ENCODE measurements at regions of chr11 and their contacts with region 1.

Region 1: GRCh38 chr11:27485930-27486773 is 13.6 kb upstream of the LGR4 start:
- DNase-seq: peak in 4 of 9 experiments; percentile 3 to 66 (median 52)
- ATAC-seq: peak; percentile 51
- H3K4me3 ChIP-seq: no peak overlapping the region
- H3K4me3 Mint-ChIP-seq: no peak overlapping the region
- H3K27ac ChIP-seq: no peak overlapping the region
- H3K27ac Mint-ChIP-seq: no peak overlapping the region
- H3K4me1 ChIP-seq: no peaks in the 10 kb centered on the region
- H3K4me1 Mint-ChIP-seq: no peaks in the 10 kb centered on the region
- H3K27me3 ChIP-seq: no peaks in the 10 kb centered on the region
- H3K27me3 Mint-ChIP-seq: no peaks in the 10 kb centered on the region
- CTCF ChIP-seq: peak; percentile 98

Region 2: GRCh38 chr11:26286472-26287066 is 1199.6 kb before region 1 on chr11:
- CTCF ChIA-PET with region 1: interaction called, 3 read pairs
- POLR2A ChIA-PET with region 1: no interaction called
- intact Hi-C with region 1: loop called (anchors 2 to 5 kb)
- DNase-seq: peak in 1 of 9 experiments; percentile 1
- ATAC-seq: no peak
- H3K4me3 ChIP-seq: no peak overlapping the region
- H3K4me3 Mint-ChIP-seq: no peak overlapping the region
- H3K27ac ChIP-seq: no peak overlapping the region
- H3K27ac Mint-ChIP-seq: no peak overlapping the region
- H3K4me1 ChIP-seq: no peaks in the 10 kb centered on the region
- H3K4me1 Mint-ChIP-seq: peaks cover 9% of the 10 kb centered on the region
- H3K27me3 ChIP-seq: no peaks in the 10 kb centered on the region
- H3K27me3 Mint-ChIP-seq: peaks cover 7% of the 10 kb centered on the region
- CTCF ChIP-seq: no peak

Region 3: DNA sequence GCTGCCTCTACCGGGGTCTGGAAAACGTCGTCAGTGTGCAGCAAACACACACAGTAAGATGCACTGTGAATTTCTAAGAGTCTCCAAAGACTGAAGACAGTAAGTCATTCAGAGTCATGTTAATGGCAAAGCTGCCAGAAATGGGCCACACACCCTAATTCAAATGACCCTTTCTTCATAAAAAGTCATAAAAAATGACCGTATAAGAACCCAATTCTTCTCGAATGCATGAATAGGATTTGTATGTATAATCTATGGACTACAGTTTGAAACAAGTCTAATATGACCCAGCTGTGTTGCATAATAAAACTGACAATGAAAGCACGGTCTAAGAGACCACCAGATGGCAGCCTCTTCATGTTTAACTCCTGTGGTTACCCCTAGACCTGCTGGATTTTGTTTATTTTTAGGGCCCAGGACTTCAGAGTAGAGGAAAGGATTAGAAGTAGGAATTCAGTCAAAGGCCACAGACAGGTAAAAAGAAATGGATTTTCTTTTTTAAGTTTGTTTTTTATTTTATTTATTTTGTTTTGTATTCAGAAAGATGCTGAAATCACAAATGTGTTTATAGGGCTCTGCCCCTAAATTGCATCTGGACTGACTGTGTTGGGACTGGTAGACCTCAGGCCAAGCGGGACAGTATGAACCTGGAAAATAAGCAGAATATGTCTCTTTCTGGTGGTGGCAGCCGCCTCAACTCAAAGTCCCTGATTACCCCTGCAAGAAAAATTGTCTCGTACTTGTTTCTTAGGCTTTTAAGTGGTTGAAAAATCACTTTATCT is 732.2 kb before region 1 on chr11:
- CTCF ChIA-PET with region 1: no interaction called
- POLR2A ChIA-PET with region 1: no interaction called
- intact Hi-C with region 1: loop called in 1 of 2 experiments (anchors 10 kb)
- DNase-seq: no peak
- ATAC-seq: no peak
- H3K4me3 ChIP-seq: no peak overlapping the region
- H3K4me3 Mint-ChIP-seq: no peak overlapping the region
- H3K27ac ChIP-seq: no peak overlapping the region
- H3K27ac Mint-ChIP-seq: no peak overlapping the region
- H3K4me1 ChIP-seq: no peaks in the 10 kb centered on the region
- H3K4me1 Mint-ChIP-seq: no peaks in the 10 kb centered on the region
- H3K27me3 ChIP-seq: no peaks in the 10 kb centered on the region
- H3K27me3 Mint-ChIP-seq: no peaks in the 10 kb centered on the region
- CTCF ChIP-seq: no peak

Region 4: DNA sequence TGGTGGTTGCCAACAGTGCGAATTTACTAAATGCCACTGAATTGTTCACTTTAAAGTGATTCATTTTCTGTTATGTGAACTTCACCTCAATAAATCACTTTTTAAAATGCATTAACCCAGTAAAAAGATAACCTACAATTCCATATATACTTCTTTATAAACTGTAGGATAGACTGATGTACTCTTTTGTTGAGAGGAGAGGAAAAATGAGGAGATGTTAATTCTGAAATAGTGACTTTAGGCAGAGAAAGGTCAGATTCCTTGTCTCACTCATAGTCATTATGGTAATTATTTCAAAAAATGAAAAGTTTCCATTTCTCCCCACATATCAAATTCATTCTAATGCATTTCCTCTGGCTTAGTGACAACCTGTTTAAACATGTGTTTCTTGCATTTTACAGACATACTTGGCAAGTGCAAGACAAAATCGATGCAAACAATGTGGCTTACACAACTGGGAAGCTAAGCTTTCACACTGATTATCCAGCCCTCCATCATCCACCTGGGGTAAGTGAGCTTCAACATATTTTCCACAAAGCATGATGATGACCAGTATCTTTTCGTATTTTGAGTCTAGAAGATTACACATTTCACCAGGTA is 371.0 kb before region 1 on chr11:
- CTCF ChIA-PET with region 1: no interaction called
- POLR2A ChIA-PET with region 1: no interaction called
- intact Hi-C with region 1: no loop called
- DNase-seq: no peak
- ATAC-seq: no peak
- H3K4me3 ChIP-seq: no peak overlapping the region
- H3K4me3 Mint-ChIP-seq: no peak overlapping the region
- H3K27ac ChIP-seq: no peak overlapping the region
- H3K27ac Mint-ChIP-seq: no peak overlapping the region
- H3K4me1 ChIP-seq: no peaks in the 10 kb centered on the region
- H3K4me1 Mint-ChIP-seq: no peaks in the 10 kb centered on the region
- H3K27me3 ChIP-seq: no peaks in the 10 kb centered on the region
- H3K27me3 Mint-ChIP-seq: no peaks in the 10 kb centered on the region
- CTCF ChIP-seq: no peak

Region 5: DNA sequence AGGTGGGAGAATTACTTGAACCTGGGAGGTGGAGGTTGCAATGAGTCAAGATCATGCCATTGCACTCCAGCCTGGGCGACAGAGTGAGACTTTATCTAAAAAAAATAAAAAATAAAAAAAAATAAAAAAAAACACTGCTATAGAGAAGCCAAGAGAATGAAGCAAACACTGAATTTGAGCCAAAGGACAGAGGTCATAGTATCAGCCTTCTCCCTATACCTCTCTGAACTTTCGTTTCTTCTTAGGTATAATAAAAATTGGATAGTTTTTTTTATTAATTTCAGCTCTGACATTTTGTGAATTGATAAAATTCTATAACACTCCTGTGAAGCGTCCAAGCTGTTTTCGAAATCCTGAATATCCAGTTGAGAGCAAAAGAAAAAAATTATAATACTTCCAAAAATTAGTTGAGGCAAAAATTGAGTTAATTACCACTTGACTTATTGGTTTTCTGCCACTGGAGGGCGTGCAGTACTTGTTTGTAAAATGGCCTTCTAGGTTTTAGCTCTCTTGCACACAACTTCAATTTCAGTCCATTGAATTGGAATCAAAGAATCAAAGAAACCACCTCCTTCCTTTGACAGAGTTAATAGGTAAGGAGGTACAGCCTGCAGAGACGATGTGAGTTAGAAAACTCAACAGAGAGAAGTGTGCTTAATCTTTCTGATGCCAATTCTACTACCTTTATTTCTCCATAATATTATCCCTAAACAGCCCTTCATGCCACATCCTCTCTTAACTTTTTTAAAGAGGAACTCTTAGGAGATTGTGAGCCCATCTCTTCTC is 302.3 kb before region 1 on chr11:
- CTCF ChIA-PET with region 1: interaction called, 56 read pairs
- POLR2A ChIA-PET with region 1: no interaction called
- intact Hi-C with region 1: loop called in 1 of 2 experiments (anchors 1 kb)
- DNase-seq: peak in 6 of 9 experiments; percentile 5 to 59 (median 34)
- ATAC-seq: no peak
- H3K4me3 ChIP-seq: no peak overlapping the region
- H3K4me3 Mint-ChIP-seq: no peak overlapping the region
- H3K27ac ChIP-seq: no peak overlapping the region
- H3K27ac Mint-ChIP-seq: no peak overlapping the region
- H3K4me1 ChIP-seq: no peaks in the 10 kb centered on the region
- H3K4me1 Mint-ChIP-seq: peaks cover 1% of the 10 kb centered on the region
- H3K27me3 ChIP-seq: no peaks in the 10 kb centered on the region
- H3K27me3 Mint-ChIP-seq: peaks cover 11% of the 10 kb centered on the region
- CTCF ChIP-seq: peak; percentile 46

Region 6: DNA sequence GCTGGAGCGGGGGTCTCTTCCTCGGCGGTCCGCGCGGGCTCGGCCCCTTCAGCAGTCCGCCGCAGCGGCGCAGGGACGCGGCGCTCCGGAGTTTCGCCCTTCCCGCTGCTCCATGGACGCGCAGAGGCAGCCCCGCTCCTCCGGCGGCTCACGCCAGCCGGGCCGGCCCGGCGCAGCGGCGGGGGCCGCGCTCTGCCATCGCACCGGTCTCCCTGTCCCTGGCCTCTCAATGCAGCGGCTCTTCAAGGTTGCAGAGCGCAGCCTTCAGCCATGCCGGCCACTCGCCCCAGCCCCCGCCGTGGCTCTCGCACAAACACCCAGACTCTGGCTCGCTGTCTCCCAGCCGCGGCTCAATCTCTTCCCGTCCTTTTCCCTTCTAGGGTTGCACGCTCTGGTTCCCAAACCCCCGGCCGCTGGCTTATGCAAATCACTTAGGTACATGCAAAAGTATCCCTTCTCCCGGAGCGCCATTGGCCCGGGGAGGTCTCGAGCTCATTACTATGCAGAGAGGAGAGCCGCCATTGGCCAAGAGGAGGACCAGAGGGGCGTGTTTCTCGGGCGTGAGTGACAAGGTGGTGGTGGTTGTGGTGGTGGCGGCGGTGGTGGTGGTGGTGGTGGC is 13.6 kb before region 1 on chr11 and contains the start of gene LGR4:
- CTCF ChIA-PET with region 1: interaction called, 41 read pairs
- POLR2A ChIA-PET with region 1: no interaction called
- intact Hi-C with region 1: no loop called
- DNase-seq: peak; percentile 39 to 81 (median 70)
- ATAC-seq: peak; percentile 91
- H3K4me3 ChIP-seq: peak within 1 kb of the TSS; percentile 62 to 72
- H3K4me3 Mint-ChIP-seq: peak within 1 kb of the TSS; percentile 92
- H3K27ac ChIP-seq: no peak within 1 kb of the TSS
- H3K27ac Mint-ChIP-seq: no peak within 1 kb of the TSS
- H3K4me1 ChIP-seq: peaks cover 8% of the 10 kb centered on the region
- H3K4me1 Mint-ChIP-seq: peaks cover 15% of the 10 kb centered on the region
- H3K27me3 ChIP-seq: no peaks in the 10 kb centered on the region
- H3K27me3 Mint-ChIP-seq: peaks cover 31% of the 10 kb centered on the region
- CTCF ChIP-seq: no peak
- total RNA-seq, gene LGR4: 0.22 to 0.90 TPM

Region 7: DNA sequence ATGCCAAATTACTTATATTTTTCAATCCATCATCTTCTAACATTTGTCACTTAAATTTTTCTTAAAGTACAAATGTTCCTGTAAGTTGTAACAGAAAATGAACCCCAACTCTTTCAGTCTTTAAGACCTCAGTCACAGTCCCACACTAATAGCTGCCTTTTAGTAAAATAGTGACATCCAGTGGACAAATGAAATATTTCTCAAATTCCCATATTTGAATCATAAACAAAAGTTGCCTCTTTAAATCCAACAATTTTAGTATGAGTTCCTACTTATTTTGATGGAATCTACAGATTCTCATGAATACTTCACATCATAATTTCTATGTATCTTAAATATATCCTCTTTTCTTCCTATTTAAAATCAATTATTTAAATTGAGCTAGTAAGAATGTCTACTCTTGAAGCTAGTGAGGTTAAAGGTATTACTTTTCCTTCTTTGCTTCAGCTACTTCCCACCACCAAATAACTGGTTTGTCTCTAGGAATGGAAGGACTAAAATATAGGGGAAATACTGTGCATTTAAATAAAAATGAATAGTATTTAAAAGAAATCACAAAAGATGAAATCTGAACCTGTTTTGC is 11.2 kb after region 1 on chr11:
- CTCF ChIA-PET with region 1: interaction called, 33 read pairs
- POLR2A ChIA-PET with region 1: no interaction called
- intact Hi-C with region 1: loop called in 1 of 2 experiments (anchors 1 kb)
- DNase-seq: peak in 2 of 9 experiments; percentile 22 to 46
- ATAC-seq: no peak
- H3K4me3 ChIP-seq: no peak overlapping the region
- H3K4me3 Mint-ChIP-seq: no peak overlapping the region
- H3K27ac ChIP-seq: no peak overlapping the region
- H3K27ac Mint-ChIP-seq: no peak overlapping the region
- H3K4me1 ChIP-seq: peaks cover 6% of the 10 kb centered on the region
- H3K4me1 Mint-ChIP-seq: peaks cover 25% of the 10 kb centered on the region
- H3K27me3 ChIP-seq: no peaks in the 10 kb centered on the region
- H3K27me3 Mint-ChIP-seq: no peaks in the 10 kb centered on the region
- CTCF ChIP-seq: peak; percentile 59

Measured in CD8-positive, alpha-beta T cell (primary cell).